Thyroid gland (tissue), 4 donors: ENCODE measurements at regions of chr12 and their contacts with region 1.

Region 1: GRCh38 chr12:56724972-56725722 is at the start of gene NACA:
- DNase-seq: peak; percentile 99 to 100
- H3K4me3 ChIP-seq: peak within 1 kb of the TSS; percentile 34 to 86 (median 72)
- H3K27ac ChIP-seq: peak within 1 kb of the TSS; percentile 92 to 97 (median 95)
- H3K4me1 ChIP-seq: peaks cover 39 to 42% of the 10 kb centered on the region in 2 donors
- H3K27me3 ChIP-seq: no peaks in the 10 kb centered on the region
- CTCF ChIP-seq: no peak
- POLR2A ChIP-seq: peak; percentile 80 to 97
- total RNA-seq, gene NACA: 1,034 to 1,717 (median 1,154) TPM

Region 2: GRCh38 chr12:56645717-56646446 is 79.3 kb before region 1 on chr12 and contains the start of gene ATP5F1B:
- intact Hi-C with region 1: loop called (anchors 10 kb)
- DNase-seq: peak; percentile 95 to 97
- H3K4me3 ChIP-seq: peak within 1 kb of the TSS; percentile 60 to 87 (median 77)
- H3K27ac ChIP-seq: peak within 1 kb of the TSS; percentile 94 to 97 (median 95)
- H3K4me1 ChIP-seq: peaks cover 14 to 17% of the 10 kb centered on the region in 2 donors
- H3K27me3 ChIP-seq: no peaks in the 10 kb centered on the region
- CTCF ChIP-seq: peak in 1 of 6 experiments; percentile 3
- POLR2A ChIP-seq: peak; percentile 92 to 99
- total RNA-seq, gene ATP5F1B: 310 to 557 (median 431) TPM